Gastrocnemius medialis (tissue), 4 donors: ENCODE measurements at regions of chr1 and their contacts with region 1.

Region 1: GRCh38 chr1:39609618-39610331 is 29.7 kb downstream of the HEYL start:
- DNase-seq: peak; percentile 7 to 24
- ATAC-seq: no peak
- H3K4me3 ChIP-seq: no peak overlapping the region
- H3K27ac ChIP-seq: peak overlapping the region in 1 of 4 donors; percentile 1
- H3K4me1 ChIP-seq: peaks cover 0 to 4% of the 10 kb centered on the region in 2 donors
- H3K27me3 ChIP-seq: no peaks in the 10 kb centered on the region
- CTCF ChIP-seq: peak in 4 of 5 experiments; percentile 52 to 77 (median 68)
- POLR2A ChIP-seq: no peak

Region 2: GRCh38 chr1:39711104-39711965 is 101.6 kb after region 1 on chr1:
- in situ Hi-C with region 1: loop called (anchors 5 to 10 kb)
- intact Hi-C with region 1: no loop called
- DNase-seq: no peak
- ATAC-seq: no peak
- H3K4me3 ChIP-seq: no peak overlapping the region
- H3K27ac ChIP-seq: no peak overlapping the region
- H3K4me1 ChIP-seq: no peaks in the 10 kb centered on the region
- H3K27me3 ChIP-seq: no peaks in the 10 kb centered on the region
- CTCF ChIP-seq: no peak
- POLR2A ChIP-seq: no peak

Region 3: GRCh38 chr1:39720094-39720999 is 110.6 kb after region 1 on chr1:
- in situ Hi-C with region 1: loop called (anchors 5 to 10 kb)
- intact Hi-C with region 1: loop called (anchors 1 kb)
- DNase-seq: peak; percentile 42 to 46
- ATAC-seq: peak; percentile 98 to 99
- H3K4me3 ChIP-seq: no peak overlapping the region
- H3K27ac ChIP-seq: peak overlapping the region; percentile 60 to 71 (median 64)
- H3K4me1 ChIP-seq: no peaks in the 10 kb centered on the region
- H3K27me3 ChIP-seq: peaks cover 0 to 5% (median 0%) of the 10 kb centered on the region in 3 donors
- CTCF ChIP-seq: peak; percentile 69 to 96 (median 77)
- POLR2A ChIP-seq: no peak

Region 4: DNA sequence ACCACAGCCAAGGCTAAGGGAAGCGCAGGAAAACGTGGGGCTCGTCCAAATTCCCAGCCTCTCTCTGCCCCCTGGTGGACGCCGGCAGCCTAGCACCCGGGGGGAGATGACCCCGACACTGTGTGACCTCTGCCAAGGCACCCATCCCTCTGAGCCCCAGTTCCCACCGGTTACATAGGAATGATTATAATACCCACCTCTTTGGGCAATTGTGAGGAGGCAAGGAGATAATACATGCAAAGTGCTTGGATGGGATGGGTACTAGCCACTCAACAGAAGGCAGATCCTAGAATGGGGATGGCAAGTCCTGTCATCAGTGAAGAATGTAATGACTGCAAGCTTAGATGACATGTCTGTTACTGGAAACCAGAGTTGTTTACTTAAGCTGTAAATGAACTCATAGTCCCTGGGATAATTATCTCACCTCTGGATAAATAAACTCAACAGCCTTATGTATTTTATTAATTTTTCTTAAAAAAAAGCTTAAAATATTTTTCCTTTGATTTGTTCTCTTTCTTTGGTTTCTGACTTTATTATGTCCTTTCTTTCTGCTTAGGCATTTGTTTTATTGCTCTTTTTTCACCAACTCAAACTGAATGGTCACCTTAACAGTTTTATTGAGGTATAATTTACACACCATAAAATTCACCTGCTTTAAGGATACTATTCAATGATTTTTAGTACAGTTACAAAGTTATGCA is 190.1 kb after region 1 on chr1:
- in situ Hi-C with region 1: loop called in 1 of 4 experiments (anchors 10 kb)
- intact Hi-C with region 1: loop called (anchors 2 kb)
- DNase-seq: peak; percentile 25 to 34
- ATAC-seq: peak; percentile 84 to 97
- H3K4me3 ChIP-seq: peak overlapping the region in 2 of 4 donors; percentile 10 to 15
- H3K27ac ChIP-seq: peak overlapping the region in 1 of 4 donors; percentile 24
- H3K4me1 ChIP-seq: peaks cover 4 to 6% of the 10 kb centered on the region in 2 donors
- H3K27me3 ChIP-seq: no peaks in the 10 kb centered on the region
- CTCF ChIP-seq: peak; percentile 61 to 94 (median 74)
- POLR2A ChIP-seq: no peak